Naive thymus-derived CD8-positive, alpha-beta T cell (primary cell): ENCODE measurements at regions of chr19 and their contacts with region 1.

Region 1: GRCh38 chr19:51377422-51377821 is 5.0 kb upstream of the NKG7 start:
- DNase-seq: no peak
- ATAC-seq: no peak
- H3K4me3 Mint-ChIP-seq: no peak overlapping the region
- H3K27ac Mint-ChIP-seq: peak overlapping the region in 1 of 10 donors; percentile 43
- H3K4me1 Mint-ChIP-seq: peaks cover 20 to 61% (median 41%) of the 10 kb centered on the region in 4 donors
- H3K27me3 Mint-ChIP-seq: no peaks in the 10 kb centered on the region

Region 2: GRCh38 chr19:51366389-51367254 is 10.8 kb before region 1 on chr19:
- POLR2A ChIA-PET with region 1: interaction called, 10 read pairs
- DNase-seq: peak; percentile 84 to 95 (median 87)
- ATAC-seq: peak; percentile 57 to 62
- H3K4me3 Mint-ChIP-seq: peak overlapping the region; percentile 93 to 100 (median 98)
- H3K27ac Mint-ChIP-seq: peak overlapping the region; percentile 83 to 98 (median 96)
- H3K4me1 Mint-ChIP-seq: peaks cover 57 to 83% (median 76%) of the 10 kb centered on the region in 4 donors
- H3K27me3 Mint-ChIP-seq: no peaks in the 10 kb centered on the region

Region 3: DNA sequence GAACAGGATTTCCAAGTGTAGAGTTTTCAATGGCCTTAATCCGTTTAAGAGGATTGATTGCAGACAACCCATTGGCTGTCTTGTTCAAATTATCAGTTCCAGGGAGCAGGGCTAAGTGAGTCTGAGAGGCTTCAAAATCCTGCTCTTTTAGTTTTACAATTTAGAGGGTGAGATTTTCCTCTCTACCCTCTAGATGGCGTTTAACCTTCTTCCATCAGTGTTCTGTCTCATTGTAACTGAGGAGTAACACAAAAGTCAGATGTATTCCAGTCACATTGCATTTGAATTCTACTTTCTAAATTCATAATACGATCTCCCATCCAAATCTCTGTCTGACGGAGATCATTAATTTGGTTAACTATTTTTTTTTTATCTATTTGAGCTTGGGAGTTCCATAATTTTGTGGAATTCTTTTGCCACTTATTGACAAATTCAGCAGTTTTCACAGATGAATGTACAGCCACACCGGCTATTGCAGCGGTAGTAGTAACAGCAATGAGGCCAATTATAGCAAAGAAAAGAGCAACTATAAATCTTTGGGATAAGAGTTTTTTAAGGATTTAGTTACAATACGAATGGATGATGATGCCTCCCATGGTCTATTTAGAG is 20.8 kb after region 1 on chr19:
- POLR2A ChIA-PET with region 1: no interaction called
- DNase-seq: peak in 2 of 10 donors; percentile 30 to 33
- ATAC-seq: no peak
- H3K4me3 Mint-ChIP-seq: no peak overlapping the region
- H3K27ac Mint-ChIP-seq: no peak overlapping the region
- H3K4me1 Mint-ChIP-seq: peaks cover 5 to 44% (median 18%) of the 10 kb centered on the region in 4 donors
- H3K27me3 Mint-ChIP-seq: peaks cover 0 to 3% (median 0%) of the 10 kb centered on the region in 5 donors